Right ventricle myocardium inferior (tissue), 1 donor: ENCODE measurements at regions of chr12 and their contacts with region 1.

Region 1: GRCh38 chr12:2451025-2451424 is 343.7 kb upstream of the FKBP4 start:
- DNase-seq: no peak
- ATAC-seq: no peak

Region 2: GRCh38 chr12:2212971-2213869 is 237.8 kb before region 1 on chr12:
- intact Hi-C with region 1: no loop called
- DNase-seq: no peak
- ATAC-seq: peak; percentile 37

Region 3: GRCh38 chr12:2401040-2401439 is 50.0 kb before region 1 on chr12:
- intact Hi-C with region 1: loop called (anchors 1 kb)
- DNase-seq: no peak
- ATAC-seq: no peak

Region 4: GRCh38 chr12:2431810-2432209 is 19.2 kb before region 1 on chr12:
- intact Hi-C with region 1: no loop called
- DNase-seq: no peak
- ATAC-seq: no peak